PC-3 (cell line): ENCODE measurements at regions of chr17 and their contacts with region 1.

Region 1: GRCh38 chr17:2847381-2848333 is 51.4 kb downstream of the RAP1GAP2 start:
- DNase-seq: no peak
- ATAC-seq: no peak
- H3K4me3 ChIP-seq: no peak overlapping the region
- H3K27ac ChIP-seq: no peak overlapping the region
- H3K4me1 ChIP-seq: no peaks in the 10 kb centered on the region; the same call in 1 of the 2 replicates
- H3K27me3 ChIP-seq: no peaks in the 10 kb centered on the region
- CTCF ChIP-seq: no peak

Region 2: GRCh38 chr17:2647957-2648356 is 199.7 kb before region 1 on chr17:
- CTCF ChIA-PET with region 1: no interaction called
- POLR2A ChIA-PET with region 1: no interaction called
- intact Hi-C with region 1: no loop called
- DNase-seq: no peak
- ATAC-seq: no peak
- H3K4me3 ChIP-seq: no peak overlapping the region
- H3K27ac ChIP-seq: no peak overlapping the region
- H3K4me1 ChIP-seq: peaks cover 11% of the 10 kb centered on the region
- H3K27me3 ChIP-seq: no peaks in the 10 kb centered on the region
- CTCF ChIP-seq: no peak

Region 3: DNA sequence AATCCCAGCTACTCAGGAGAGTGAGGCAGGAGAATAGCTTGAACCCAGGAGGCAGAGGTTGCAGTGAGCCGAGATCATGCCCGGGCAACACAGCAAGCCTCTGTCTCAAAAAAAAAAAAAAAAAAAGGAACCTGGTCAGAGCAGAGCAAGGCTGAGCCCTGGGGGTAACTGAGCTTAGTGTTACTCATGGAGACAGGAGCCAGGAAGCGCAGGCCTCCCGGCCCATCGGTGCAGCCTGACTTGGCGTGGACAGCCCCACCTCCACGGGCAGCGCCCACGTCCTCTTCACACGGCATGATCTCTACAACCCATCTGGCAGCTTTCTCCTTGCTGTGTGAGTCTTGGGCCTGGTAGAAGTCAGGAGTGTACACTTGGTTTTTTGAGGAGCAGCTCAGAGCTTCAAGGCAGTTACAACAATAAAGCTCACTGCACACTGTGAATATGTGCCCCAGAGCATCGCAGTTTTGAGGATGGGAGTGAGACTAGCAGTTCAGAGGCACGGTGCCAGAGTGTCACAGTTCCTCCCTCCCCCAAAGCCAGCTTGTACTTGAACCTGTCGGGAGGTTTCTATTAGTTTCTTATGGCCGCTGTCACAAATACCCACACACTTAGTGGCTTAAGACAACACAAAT is 78.5 kb after region 1 on chr17:
- CTCF ChIA-PET with region 1: no interaction called
- POLR2A ChIA-PET with region 1: no interaction called
- intact Hi-C with region 1: loop called (anchors 2 kb)
- DNase-seq: peak; percentile 75
- ATAC-seq: peak; percentile 95
- H3K4me3 ChIP-seq: no peak overlapping the region
- H3K27ac ChIP-seq: peak overlapping the region; percentile 63
- H3K4me1 ChIP-seq: peaks cover 11% of the 10 kb centered on the region
- H3K27me3 ChIP-seq: no peaks in the 10 kb centered on the region
- CTCF ChIP-seq: no peak

Region 4: GRCh38 chr17:3012926-3013581 is 165.4 kb after region 1 on chr17:
- CTCF ChIA-PET with region 1: interaction called, 4 read pairs
- POLR2A ChIA-PET with region 1: interaction called, 4 read pairs
- intact Hi-C with region 1: loop called (anchors 1 kb)
- DNase-seq: peak; percentile 56
- ATAC-seq: peak; percentile 83
- H3K4me3 ChIP-seq: no peak overlapping the region
- H3K27ac ChIP-seq: no peak overlapping the region
- H3K4me1 ChIP-seq: peaks cover 8% of the 10 kb centered on the region; the same call in 1 of the 2 replicates
- H3K27me3 ChIP-seq: no peaks in the 10 kb centered on the region
- CTCF ChIP-seq: peak; percentile 65